HepG2 (cell line): ENCODE measurements at regions of chr15 and their contacts with region 1.

Region 1: GRCh38 chr15:79853458-79854328 is 43.1 kb downstream of the MTHFS start:
- DNase-seq: peak; percentile 58
- ATAC-seq: peak; percentile 98
- H3K4me3 ChIP-seq: no peak overlapping the region
- H3K27ac ChIP-seq: no peak overlapping the region
- H3K4me1 ChIP-seq: peaks cover 9% of the 10 kb centered on the region
- H3K27me3 ChIP-seq: no peaks in the 10 kb centered on the region
- CTCF ChIP-seq: peak; percentile 88
- EP300 ChIP-seq: no peak
- POLR2A ChIP-seq: no peak
- RAD21 ChIP-seq: peak; percentile 63; the same call in 1 of the 2 replicates

Region 2: GRCh38 chr15:79339564-79340314 is 514.0 kb before region 1 on chr15:
- CTCF ChIA-PET with region 1: no interaction called
- POLR2A ChIA-PET with region 1: no interaction called
- in situ Hi-C with region 1: no loop called
- intact Hi-C with region 1: loop called (anchors 1 kb)
- DNase-seq: peak; percentile 13
- ATAC-seq: no peak; the same call in 2 of the 3 replicates
- H3K4me3 ChIP-seq: no peak overlapping the region
- H3K27ac ChIP-seq: no peak overlapping the region
- H3K4me1 ChIP-seq: no peaks in the 10 kb centered on the region
- H3K27me3 ChIP-seq: no peaks in the 10 kb centered on the region
- CTCF ChIP-seq: peak; percentile 69
- EP300 ChIP-seq: no peak
- POLR2A ChIP-seq: no peak
- RAD21 ChIP-seq: no peak

Region 3: GRCh38 chr15:79380755-79381497 is 472.8 kb before region 1 on chr15:
- CTCF ChIA-PET with region 1: interaction called, 8 read pairs
- POLR2A ChIA-PET with region 1: interaction called, 3 read pairs
- in situ Hi-C with region 1: no loop called
- intact Hi-C with region 1: loop called (anchors 2 kb)
- DNase-seq: peak; percentile 63
- ATAC-seq: peak; percentile 99
- H3K4me3 ChIP-seq: no peak overlapping the region
- H3K27ac ChIP-seq: no peak overlapping the region
- H3K4me1 ChIP-seq: peaks cover 14% of the 10 kb centered on the region
- H3K27me3 ChIP-seq: no peaks in the 10 kb centered on the region; a peak in 1 of 5 replicates
- CTCF ChIP-seq: peak; percentile 86
- EP300 ChIP-seq: no peak
- POLR2A ChIP-seq: no peak
- RAD21 ChIP-seq: peak; percentile 62; the same call in 1 of the 2 replicates

Region 4: GRCh38 chr15:79798311-79798710 is 55.4 kb before region 1 on chr15:
- CTCF ChIA-PET with region 1: no interaction called
- POLR2A ChIA-PET with region 1: no interaction called
- in situ Hi-C with region 1: no loop called
- intact Hi-C with region 1: no loop called
- DNase-seq: no peak
- ATAC-seq: no peak
- H3K4me3 ChIP-seq: no peak overlapping the region
- H3K27ac ChIP-seq: no peak overlapping the region
- H3K4me1 ChIP-seq: no peaks in the 10 kb centered on the region
- H3K27me3 ChIP-seq: peaks cover 1 to 5% of the 10 kb centered on the region in 2 experiments; a peak in 1 of 5 replicates
- CTCF ChIP-seq: no peak
- EP300 ChIP-seq: no peak
- POLR2A ChIP-seq: no peak
- RAD21 ChIP-seq: no peak